ENCODE measurements at regions of chr1 and their contacts with region 1.

Region 1: DNA sequence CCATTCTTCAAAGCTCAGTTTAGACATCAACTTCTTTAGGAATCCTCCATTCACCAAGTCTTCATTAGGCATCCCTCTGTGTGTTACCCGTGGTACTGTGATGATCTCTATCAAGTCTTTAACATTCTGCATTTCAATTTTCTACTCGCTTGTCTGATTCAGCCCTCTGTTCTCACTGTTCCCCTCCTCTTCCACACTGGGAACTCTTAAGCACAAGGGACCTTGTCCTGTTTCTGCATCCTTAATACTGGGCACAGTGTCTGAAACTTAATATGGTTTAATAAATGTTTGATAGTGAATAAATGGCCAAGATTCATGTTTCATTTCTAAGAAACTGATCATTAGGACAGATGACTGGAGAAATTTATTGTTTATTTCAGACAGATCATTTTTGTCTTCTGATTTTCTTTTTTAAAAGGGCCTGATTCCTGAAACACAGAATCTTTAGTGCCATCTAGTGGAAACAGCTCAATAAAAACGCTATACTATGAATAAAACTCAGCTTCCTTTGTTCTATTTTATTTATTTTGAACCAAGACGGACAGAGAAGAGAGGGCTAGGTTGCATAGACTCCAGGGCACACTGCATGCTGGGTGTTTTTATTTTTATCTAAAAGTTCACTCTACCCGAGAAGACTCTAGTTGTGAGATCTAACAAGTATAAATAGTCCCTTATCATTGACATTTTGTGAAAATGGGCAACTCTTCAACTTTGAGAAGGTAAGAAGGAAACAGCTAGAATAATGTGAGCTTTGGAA is 7.0 kb upstream of the TRIM45 start:
- DNase-seq: no peak
- ATAC-seq: no peak
- H3K4me3 Mint-ChIP-seq: no peak overlapping the region
- H3K27ac Mint-ChIP-seq: no peak overlapping the region
- H3K4me1 Mint-ChIP-seq: no peaks in the 10 kb centered on the region
- H3K27me3 Mint-ChIP-seq: peaks cover 14% of the 10 kb centered on the region

Region 2: DNA sequence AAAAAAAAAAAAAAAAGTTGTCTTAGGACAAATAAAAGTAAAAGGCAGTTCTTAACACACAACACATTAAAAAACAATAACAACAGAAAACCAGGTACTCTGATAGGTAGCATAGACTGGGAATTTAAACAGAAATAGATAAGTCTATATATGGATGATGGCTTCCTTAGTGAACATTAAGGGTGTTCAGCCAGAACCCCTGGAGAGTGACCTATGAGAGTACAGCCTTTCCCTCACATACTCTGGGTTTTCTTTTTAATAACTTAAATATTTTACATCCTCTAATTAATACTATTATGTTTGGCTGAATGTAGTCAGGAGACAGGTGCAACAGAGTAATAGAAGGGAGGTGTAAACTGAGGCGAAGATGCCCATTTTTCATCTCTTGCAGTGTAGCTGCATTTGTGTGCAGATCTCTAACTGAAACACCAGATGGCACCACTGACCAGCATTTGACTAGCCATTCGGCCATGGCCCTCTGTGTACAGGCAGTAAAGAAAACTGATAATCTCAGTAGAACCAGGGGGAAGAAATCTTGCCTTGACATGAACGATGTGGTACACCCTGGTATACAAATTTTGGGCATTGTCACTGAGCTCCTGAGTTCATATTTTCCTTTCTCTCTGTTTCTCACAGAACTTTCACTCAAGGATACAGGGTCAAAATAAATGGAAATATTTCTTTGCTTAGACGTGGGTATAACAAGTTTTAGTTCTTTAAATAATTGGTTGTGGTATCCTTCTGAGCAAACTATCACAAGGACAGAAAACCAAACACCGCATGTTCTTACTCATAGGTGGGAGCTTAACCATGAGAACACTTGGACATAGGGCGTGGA is 60.7 kb before region 1 on chr1:
- CTCF ChIA-PET with region 1: interaction called, 16 read pairs
- DNase-seq: peak; percentile 58
- ATAC-seq: peak; percentile 69
- H3K4me3 Mint-ChIP-seq: no peak overlapping the region
- H3K27ac Mint-ChIP-seq: peak overlapping the region; percentile 20
- H3K4me1 Mint-ChIP-seq: peaks cover 52% of the 10 kb centered on the region
- H3K27me3 Mint-ChIP-seq: no peaks in the 10 kb centered on the region

Region 3: DNA sequence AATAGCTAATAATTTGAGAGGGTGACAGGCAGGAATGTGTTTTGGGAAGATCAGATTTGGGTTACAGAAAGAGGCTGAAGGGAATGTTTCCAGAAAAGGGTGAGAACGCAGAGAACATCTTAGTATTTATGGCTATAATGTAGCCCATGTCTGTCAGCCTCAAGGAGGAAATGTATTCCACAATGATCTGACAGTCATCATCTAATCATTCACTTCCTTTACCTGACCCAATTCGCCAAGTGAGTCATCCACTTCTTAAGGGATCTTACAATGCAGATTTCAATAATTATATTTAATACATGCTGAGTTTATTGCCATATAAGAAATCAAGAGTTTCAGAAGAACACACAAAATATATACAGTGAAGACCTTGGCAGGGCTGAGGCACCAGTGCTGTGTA is 17.7 kb before region 1 on chr1:
- CTCF ChIA-PET with region 1: interaction called, 11 read pairs
- DNase-seq: no peak
- ATAC-seq: no peak
- H3K4me3 Mint-ChIP-seq: no peak overlapping the region
- H3K27ac Mint-ChIP-seq: no peak overlapping the region
- H3K4me1 Mint-ChIP-seq: peaks cover 6% of the 10 kb centered on the region
- H3K27me3 Mint-ChIP-seq: no peaks in the 10 kb centered on the region

Region 4: GRCh38 chr1:117239467-117239866 is 111.0 kb after region 1 on chr1:
- CTCF ChIA-PET with region 1: no interaction called
- DNase-seq: no peak
- ATAC-seq: no peak
- H3K4me3 Mint-ChIP-seq: no peak overlapping the region
- H3K27ac Mint-ChIP-seq: no peak overlapping the region
- H3K4me1 Mint-ChIP-seq: no peaks in the 10 kb centered on the region
- H3K27me3 Mint-ChIP-seq: peaks cover 41% of the 10 kb centered on the region

Measured in activated CD8-positive, alpha-beta memory T cell treated with anti-CD3 and anti-CD28 coated beads, Interleukin-2, amount 10 ng/mL, durations not matched to agents 7 days and 5 days (primary cell).